ENCODE measurements at regions of chr12 and their contacts with region 1.

Region 1: GRCh38 chr12:6965026-6965661 is 5.3 kb downstream of the PHB2 start:
- DNase-seq: peak; percentile 77 to 89 (median 85)
- ATAC-seq: peak; percentile 69
- H3K4me3 ChIP-seq: no peak overlapping the region
- H3K4me3 Mint-ChIP-seq: peak overlapping the region in 3 of 10 donors; percentile 9 to 23 (median 17)
- H3K27ac ChIP-seq: peak overlapping the region; percentile 68
- H3K27ac Mint-ChIP-seq: peak overlapping the region; percentile 75 to 95 (median 87)
- H3K4me1 ChIP-seq: peaks cover 45 to 60% of the 10 kb centered on the region in 2 donors
- H3K4me1 Mint-ChIP-seq: peaks cover 33 to 59% (median 56%) of the 10 kb centered on the region in 7 donors
- H3K27me3 ChIP-seq: no peaks in the 10 kb centered on the region
- H3K27me3 Mint-ChIP-seq: no peaks in the 10 kb centered on the region

Region 2: DNA sequence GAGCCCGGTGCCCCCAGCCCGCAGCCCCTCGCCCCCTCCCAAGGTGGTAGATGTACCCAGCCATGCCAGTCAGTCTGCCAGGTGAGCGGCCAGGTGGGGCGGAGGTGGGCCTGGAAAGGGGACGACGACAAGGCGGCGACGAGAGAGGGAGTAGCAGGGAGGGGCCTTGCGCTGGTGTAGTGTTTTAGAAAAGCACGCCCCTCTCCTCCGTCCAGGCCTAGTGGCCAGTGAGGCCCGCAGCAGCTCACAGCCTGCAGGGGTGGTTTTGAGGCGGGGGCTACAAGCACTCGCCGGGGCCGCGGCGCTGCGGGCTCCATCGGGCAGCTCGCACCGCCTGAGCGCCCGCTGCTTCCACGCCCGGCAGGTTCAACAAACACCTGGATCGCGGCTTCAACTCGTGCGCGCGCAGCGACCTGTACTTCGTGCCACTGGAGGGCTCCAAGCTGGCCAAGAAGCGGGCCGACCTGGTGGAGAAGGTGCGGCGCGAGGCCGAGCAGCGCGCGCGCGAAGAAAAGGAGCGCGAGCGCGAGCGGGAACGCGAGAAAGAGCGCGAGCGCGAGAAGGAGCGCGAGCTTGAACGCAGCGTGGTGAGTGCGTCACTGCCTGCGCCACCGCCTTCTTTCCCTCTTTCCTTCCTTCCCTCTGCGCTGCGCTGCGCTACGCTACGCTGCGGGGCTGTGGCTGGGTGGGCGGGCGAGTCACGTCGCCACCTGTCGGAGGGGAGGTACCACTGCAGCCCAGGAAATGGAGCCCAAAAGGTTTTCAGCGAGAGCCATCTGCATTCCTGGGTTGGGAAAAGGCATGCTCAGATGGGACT is 27.5 kb before region 1 on chr12:
- CTCF ChIA-PET with region 1: interaction called, 460 read pairs
- POLR2A ChIA-PET with region 1: interaction called, 1,270 read pairs
- intact Hi-C with region 1: loop called (anchors 1 kb)
- DNase-seq: peak; percentile 81 to 96 (median 93)
- ATAC-seq: peak; percentile 97
- H3K4me3 ChIP-seq: peak overlapping the region; percentile 90
- H3K4me3 Mint-ChIP-seq: peak overlapping the region; percentile 75 to 88 (median 84)
- H3K27ac ChIP-seq: peak overlapping the region; percentile 92
- H3K27ac Mint-ChIP-seq: peak overlapping the region; percentile 91 to 99 (median 96)
- H3K4me1 ChIP-seq: peaks cover 5 to 29% of the 10 kb centered on the region in 2 donors
- H3K4me1 Mint-ChIP-seq: peaks cover 41 to 67% (median 51%) of the 10 kb centered on the region in 7 donors
- H3K27me3 ChIP-seq: no peaks in the 10 kb centered on the region
- H3K27me3 Mint-ChIP-seq: no peaks in the 10 kb centered on the region

Region 3: GRCh38 chr12:6953442-6954315 is 11.5 kb before region 1 on chr12:
- CTCF ChIA-PET with region 1: interaction called, 460 read pairs
- POLR2A ChIA-PET with region 1: interaction called, 1,270 read pairs
- intact Hi-C with region 1: loop called (anchors 1 kb)
- DNase-seq: peak in 8 of 9 donors; percentile 65 to 92 (median 74)
- ATAC-seq: peak; percentile 56
- H3K4me3 ChIP-seq: peak overlapping the region; percentile 92
- H3K4me3 Mint-ChIP-seq: peak overlapping the region; percentile 93 to 100 (median 98)
- H3K27ac ChIP-seq: peak overlapping the region; percentile 95
- H3K27ac Mint-ChIP-seq: peak overlapping the region; percentile 83 to 100 (median 97)
- H3K4me1 ChIP-seq: peaks cover 70 to 84% of the 10 kb centered on the region in 2 donors
- H3K4me1 Mint-ChIP-seq: peaks cover 54 to 85% (median 72%) of the 10 kb centered on the region in 7 donors
- H3K27me3 ChIP-seq: no peaks in the 10 kb centered on the region
- H3K27me3 Mint-ChIP-seq: no peaks in the 10 kb centered on the region

Region 4: GRCh38 chr12:7092229-7092985 is 127.3 kb after region 1 on chr12 and contains the start of gene C1R:
- CTCF ChIA-PET with region 1: no interaction called
- POLR2A ChIA-PET with region 1: no interaction called
- intact Hi-C with region 1: loop called in 1 of 2 experiments (anchors 5 kb)
- DNase-seq: peak; percentile 46 to 71 (median 64)
- ATAC-seq: peak; percentile 81
- H3K4me3 ChIP-seq: peak within 1 kb of the TSS; percentile 66
- H3K4me3 Mint-ChIP-seq: peak within 1 kb of the TSS; percentile 76 to 91 (median 86)
- H3K27ac ChIP-seq: peak within 1 kb of the TSS; percentile 44
- H3K27ac Mint-ChIP-seq: peak within 1 kb of the TSS in 8 of 9 donors; percentile 65 to 94 (median 78)
- H3K4me1 ChIP-seq: peaks cover 7 to 8% of the 10 kb centered on the region in 2 donors
- H3K4me1 Mint-ChIP-seq: peaks cover 0 to 14% (median 9%) of the 10 kb centered on the region in 7 donors
- H3K27me3 ChIP-seq: no peaks in the 10 kb centered on the region
- H3K27me3 Mint-ChIP-seq: no peaks in the 10 kb centered on the region
- total RNA-seq, gene C1R: 1.6 to 7.2 (median 4.8) TPM

Region 5: DNA sequence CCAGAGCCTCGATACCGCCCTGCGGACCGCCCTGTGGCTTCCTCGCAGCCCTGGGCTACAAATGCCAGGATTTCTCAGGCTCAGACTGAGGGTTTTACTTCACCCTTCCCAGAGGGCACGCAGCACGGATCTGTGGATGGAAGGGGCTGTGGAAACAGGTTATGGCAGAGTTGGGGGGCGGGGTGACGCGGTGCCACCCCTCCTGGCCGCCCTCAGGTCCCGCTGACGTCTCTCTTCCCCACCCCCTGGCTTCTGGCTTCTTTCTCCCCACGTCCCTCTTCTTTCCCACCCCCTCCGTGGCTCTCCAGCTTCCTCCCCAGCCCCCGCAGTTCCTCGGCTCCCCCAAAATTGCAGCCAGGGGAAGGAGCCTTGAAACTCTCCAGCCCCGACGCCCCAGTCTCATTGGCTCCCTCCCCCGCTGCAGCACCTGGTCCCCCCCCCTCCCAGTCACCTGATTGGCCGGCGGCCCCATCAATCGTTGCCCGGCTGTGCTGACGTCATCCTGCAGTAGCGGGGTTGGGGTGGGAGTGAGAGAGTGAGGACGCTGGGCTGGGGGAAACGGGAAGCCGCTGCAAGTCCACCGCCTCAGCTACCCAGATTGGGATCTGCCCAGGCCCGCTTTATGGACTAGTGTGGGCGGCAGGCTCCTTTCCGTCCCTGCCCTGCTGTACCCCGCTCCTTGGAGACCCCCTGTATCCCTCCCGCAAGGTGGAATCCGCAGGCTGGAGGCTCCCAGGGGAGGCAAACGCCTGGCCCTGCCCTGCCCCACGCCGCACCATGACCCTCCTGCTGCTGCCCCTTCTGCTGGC is 164.9 kb after region 1 on chr12 and contains the start of gene CLSTN3:
- CTCF ChIA-PET with region 1: no interaction called
- POLR2A ChIA-PET with region 1: no interaction called
- intact Hi-C with region 1: loop called in 1 of 2 experiments (anchors 1 kb)
- DNase-seq: peak; percentile 70 to 88 (median 83)
- ATAC-seq: peak; percentile 93
- H3K4me3 ChIP-seq: peak within 1 kb of the TSS; percentile 88
- H3K4me3 Mint-ChIP-seq: peak within 1 kb of the TSS; percentile 94 to 100 (median 96)
- H3K27ac ChIP-seq: peak within 1 kb of the TSS; percentile 73
- H3K27ac Mint-ChIP-seq: peak within 1 kb of the TSS; percentile 73 to 95 (median 92)
- H3K4me1 ChIP-seq: peaks cover 18% of the 10 kb centered on the region in 2 donors
- H3K4me1 Mint-ChIP-seq: peaks cover 29 to 41% (median 34%) of the 10 kb centered on the region in 7 donors
- H3K27me3 ChIP-seq: no peaks in the 10 kb centered on the region
- H3K27me3 Mint-ChIP-seq: no peaks in the 10 kb centered on the region
- total RNA-seq, gene CLSTN3: 20.2 to 76.3 (median 38.7) TPM

Measured in naive thymus-derived CD4-positive, alpha-beta T cell (primary cell).